GM12878 (cell line): ENCODE measurements at regions of chr17 and their contacts with region 1.

Region 1: DNA sequence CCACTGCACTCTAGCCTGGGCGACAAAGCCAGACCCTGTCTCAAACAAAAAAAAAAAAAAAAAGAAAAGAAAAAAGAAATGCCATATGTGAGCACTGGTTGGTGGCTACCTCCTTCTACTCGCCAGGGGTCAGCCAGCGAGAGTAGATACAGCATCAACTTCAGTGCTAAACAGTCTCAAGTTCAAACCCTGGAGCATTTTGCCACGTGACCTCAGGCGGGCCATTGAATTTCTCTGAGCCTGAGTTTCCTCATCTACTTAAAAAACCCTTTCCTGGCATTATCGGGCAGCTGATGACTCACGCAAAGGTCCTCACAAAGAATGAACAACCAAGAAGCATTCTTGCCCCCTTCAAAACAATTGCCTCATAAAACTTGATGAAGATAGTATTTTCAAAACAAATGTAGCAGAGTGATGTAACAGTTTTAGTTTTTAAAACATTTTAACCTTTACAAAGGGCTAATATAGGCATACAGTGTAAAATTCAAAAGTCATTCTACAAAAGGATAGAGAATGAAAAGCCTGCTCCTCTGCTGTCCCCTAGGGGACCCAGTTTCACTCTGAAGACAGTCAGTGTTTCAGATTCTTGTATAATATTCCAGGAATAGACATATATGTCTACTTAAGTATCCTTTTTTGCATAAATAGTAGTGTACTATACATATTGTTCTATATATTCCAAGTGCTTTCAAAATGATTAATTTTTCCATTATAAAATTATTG is 28.4 kb downstream of the DNAH2 start:
- DNase-seq: no peak
- ATAC-seq: no peak
- H3K4me3 ChIP-seq: no peak overlapping the region
- H3K27ac ChIP-seq: no peak overlapping the region
- H3K4me1 ChIP-seq: no peaks in the 10 kb centered on the region
- H3K27me3 ChIP-seq: no peaks in the 10 kb centered on the region; a peak in 3 of 4 replicates
- CTCF ChIP-seq: no peak
- EP300 ChIP-seq: no peak
- POLR2A ChIP-seq: no peak
- RAD21 ChIP-seq: no peak

Region 2: GRCh38 chr17:7777017-7777416 is 31.1 kb after region 1 on chr17:
- CTCF ChIA-PET with region 1: interaction called, 19 read pairs
- POLR2A ChIA-PET with region 1: no interaction called
- RAD21 ChIA-PET with region 1: interaction called, 14 read pairs
- SMC1A ChIA-PET with region 1: interaction called, 3 read pairs
- in situ Hi-C with region 1: no loop called
- intact Hi-C with region 1: no loop called
- DNase-seq: no peak
- ATAC-seq: no peak
- H3K4me3 ChIP-seq: no peak overlapping the region
- H3K27ac ChIP-seq: no peak overlapping the region
- H3K4me1 ChIP-seq: peaks cover 8% of the 10 kb centered on the region
- H3K27me3 ChIP-seq: peaks cover 3 to 7% of the 10 kb centered on the region in 2 experiments
- CTCF ChIP-seq: no peak
- EP300 ChIP-seq: no peak
- POLR2A ChIP-seq: no peak
- RAD21 ChIP-seq: no peak

Region 3: GRCh38 chr17:7825206-7825990 is 79.5 kb after region 1 on chr17:
- CTCF ChIA-PET with region 1: interaction called, 11 read pairs
- POLR2A ChIA-PET with region 1: no interaction called
- RAD21 ChIA-PET with region 1: interaction called, 9 read pairs
- SMC1A ChIA-PET with region 1: interaction called, 6 read pairs
- in situ Hi-C with region 1: no loop called
- intact Hi-C with region 1: loop called (anchors 10 kb)
- DNase-seq: no peak
- ATAC-seq: 0 out of 3 replicates have a peak, but pooled peaks have one; percentile 28
- H3K4me3 ChIP-seq: no peak overlapping the region
- H3K27ac ChIP-seq: no peak overlapping the region
- H3K4me1 ChIP-seq: no peaks in the 10 kb centered on the region
- H3K27me3 ChIP-seq: no peaks in the 10 kb centered on the region; a peak in 1 of 4 replicates
- CTCF ChIP-seq: no peak; a peak in 1 of 6 replicates
- EP300 ChIP-seq: no peak
- POLR2A ChIP-seq: no peak
- RAD21 ChIP-seq: no peak

Region 4: DNA sequence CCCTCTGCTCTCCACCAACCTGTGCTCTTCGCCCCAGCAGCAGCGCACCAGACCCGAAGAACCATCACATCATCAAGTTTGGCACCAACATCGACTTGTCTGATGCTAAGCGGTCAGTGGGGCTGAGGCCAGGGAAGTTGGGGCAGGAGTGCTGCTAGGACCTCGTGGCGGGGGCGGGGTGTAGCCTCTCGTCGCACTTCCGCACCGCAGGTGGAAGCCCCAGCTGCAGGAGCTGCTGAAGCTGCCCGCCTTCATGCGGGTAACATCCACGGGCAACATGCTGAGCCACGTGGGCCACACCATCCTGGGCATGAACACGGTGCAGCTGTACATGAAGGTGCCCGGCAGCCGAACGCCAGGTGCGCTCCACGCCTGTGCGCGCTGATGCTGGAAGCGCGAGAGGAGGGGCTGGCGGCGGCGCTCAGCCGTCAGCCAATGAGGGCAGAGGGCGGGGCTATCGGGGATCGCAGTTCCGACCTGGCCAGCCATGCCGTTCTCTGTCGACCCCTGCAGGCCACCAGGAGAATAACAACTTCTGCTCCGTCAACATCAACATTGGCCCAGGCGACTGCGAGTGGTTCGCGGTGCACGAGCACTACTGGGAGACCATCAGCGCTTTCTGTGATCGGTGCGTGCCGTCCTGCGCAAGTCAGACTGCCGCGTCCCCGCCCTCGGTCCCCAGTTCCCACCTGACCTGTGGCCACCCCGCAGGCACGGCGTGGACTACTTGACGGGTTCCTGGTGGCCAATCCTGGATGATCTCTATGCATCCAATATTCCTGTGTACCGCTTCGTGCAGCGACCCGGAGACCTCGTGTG is 105.7 kb after region 1 on chr17:
- CTCF ChIA-PET with region 1: interaction called, 22 read pairs
- POLR2A ChIA-PET with region 1: no interaction called
- RAD21 ChIA-PET with region 1: interaction called, 8 read pairs
- SMC1A ChIA-PET with region 1: interaction called, 3 read pairs
- in situ Hi-C with region 1: no loop called
- intact Hi-C with region 1: loop called (anchors 2 kb)
- DNase-seq: peak; percentile 73
- ATAC-seq: peak; percentile 90
- H3K4me3 ChIP-seq: peak overlapping the region; percentile 41; the same call in 1 of the 2 replicates
- H3K27ac ChIP-seq: no peak overlapping the region
- H3K4me1 ChIP-seq: peaks cover 26% of the 10 kb centered on the region
- H3K27me3 ChIP-seq: no peaks in the 10 kb centered on the region
- CTCF ChIP-seq: peak; percentile 95 to 100 (median 98); a peak in 5 of 6 replicates
- EP300 ChIP-seq: no peak
- POLR2A ChIP-seq: peak; percentile 71; the same call in 1 of the 2 replicates
- RAD21 ChIP-seq: peak; percentile 84

Region 5: DNA sequence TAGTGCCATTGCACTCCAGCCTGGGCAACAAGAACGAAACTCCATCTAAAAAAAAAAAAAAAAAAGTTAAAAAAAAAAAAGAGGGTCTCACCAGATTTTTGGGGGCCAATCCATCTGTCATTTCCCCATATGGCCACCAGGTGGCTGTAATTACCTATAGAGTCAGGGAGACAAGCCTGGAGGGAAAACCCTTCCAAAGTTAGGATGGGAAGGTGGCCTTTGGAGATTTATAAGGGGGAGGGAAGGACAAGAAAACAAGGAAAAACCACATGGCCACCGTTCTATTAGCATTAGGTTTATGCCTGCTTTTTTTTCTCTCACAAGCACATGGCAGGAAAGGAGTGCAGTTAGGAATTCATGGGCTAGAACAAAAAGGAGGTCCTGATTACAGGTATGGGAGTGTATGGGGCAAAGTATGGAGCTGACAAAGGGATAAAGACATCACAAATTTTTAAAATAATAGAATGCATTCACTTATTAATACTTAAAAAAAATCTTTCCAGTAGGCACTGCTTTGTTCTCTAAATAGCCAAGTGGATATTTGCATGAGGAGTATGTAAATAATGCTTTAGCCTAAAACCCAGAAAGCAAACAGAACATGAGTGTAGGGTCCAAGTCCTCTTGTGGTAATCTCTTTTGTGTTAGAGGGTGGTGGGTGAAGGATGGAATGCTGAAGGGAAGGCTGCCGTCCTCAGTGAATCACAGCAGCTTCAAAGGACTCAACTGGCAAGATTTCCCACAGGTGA is 117.0 kb after region 1 on chr17:
- CTCF ChIA-PET with region 1: interaction called, 22 read pairs
- POLR2A ChIA-PET with region 1: interaction called, 4 read pairs
- RAD21 ChIA-PET with region 1: interaction called, 5 read pairs
- SMC1A ChIA-PET with region 1: no interaction called
- in situ Hi-C with region 1: no loop called
- intact Hi-C with region 1: no loop called
- DNase-seq: no peak
- ATAC-seq: no peak
- H3K4me3 ChIP-seq: no peak overlapping the region
- H3K27ac ChIP-seq: no peak overlapping the region
- H3K4me1 ChIP-seq: peaks cover 4% of the 10 kb centered on the region
- H3K27me3 ChIP-seq: no peaks in the 10 kb centered on the region
- CTCF ChIP-seq: peak; percentile 64 to 73 (median 67)
- EP300 ChIP-seq: no peak
- POLR2A ChIP-seq: no peak
- RAD21 ChIP-seq: peak; percentile 93